Transverse colon (tissue), 4 donors: ENCODE measurements at regions of chr1 and their contacts with region 1.

Region 1: GRCh38 chr1:189158155-189158554 is 1319.5 kb downstream of the BRINP3 start:
- DNase-seq: no peak
- H3K4me3 ChIP-seq: no peak overlapping the region
- H3K27ac ChIP-seq: no peak overlapping the region
- H3K4me1 ChIP-seq: no peaks in the 10 kb centered on the region
- H3K27me3 ChIP-seq: no peaks in the 10 kb centered on the region
- CTCF ChIP-seq: no peak
- EP300 ChIP-seq: no peak
- POLR2A ChIP-seq: no peak

Region 2: GRCh38 chr1:188930382-188930781 is 227.8 kb before region 1 on chr1:
- in situ Hi-C with region 1: no loop called
- intact Hi-C with region 1: no loop called
- DNase-seq: no peak
- H3K4me3 ChIP-seq: no peak overlapping the region
- H3K27ac ChIP-seq: no peak overlapping the region
- H3K4me1 ChIP-seq: no peaks in the 10 kb centered on the region
- H3K27me3 ChIP-seq: no peaks in the 10 kb centered on the region
- CTCF ChIP-seq: no peak
- EP300 ChIP-seq: no peak
- POLR2A ChIP-seq: no peak

Region 3: DNA sequence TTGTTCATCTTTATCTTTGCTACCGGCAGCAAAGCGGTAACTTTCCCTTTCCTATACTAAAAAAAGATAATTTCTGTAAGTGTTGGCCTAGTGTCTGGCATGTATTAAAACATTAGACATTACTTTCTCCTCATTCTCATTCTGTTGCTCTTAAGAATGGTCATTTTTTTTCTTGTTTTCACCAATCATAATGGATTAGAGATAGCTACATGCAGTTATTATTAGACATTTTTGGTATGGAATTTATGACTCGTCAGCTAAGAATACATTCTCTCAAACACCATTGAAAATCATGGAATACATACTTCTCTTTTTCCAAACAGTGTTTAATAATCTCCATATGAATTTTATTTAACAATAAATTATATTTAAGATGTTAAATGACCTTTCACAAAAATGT is 164.9 kb after region 1 on chr1:
- in situ Hi-C with region 1: no loop called
- intact Hi-C with region 1: loop called (anchors 5 kb)
- DNase-seq: no peak
- H3K4me3 ChIP-seq: no peak overlapping the region
- H3K27ac ChIP-seq: no peak overlapping the region
- H3K4me1 ChIP-seq: no peaks in the 10 kb centered on the region
- H3K27me3 ChIP-seq: no peaks in the 10 kb centered on the region
- CTCF ChIP-seq: no peak
- EP300 ChIP-seq: no peak
- POLR2A ChIP-seq: no peak

Region 4: DNA sequence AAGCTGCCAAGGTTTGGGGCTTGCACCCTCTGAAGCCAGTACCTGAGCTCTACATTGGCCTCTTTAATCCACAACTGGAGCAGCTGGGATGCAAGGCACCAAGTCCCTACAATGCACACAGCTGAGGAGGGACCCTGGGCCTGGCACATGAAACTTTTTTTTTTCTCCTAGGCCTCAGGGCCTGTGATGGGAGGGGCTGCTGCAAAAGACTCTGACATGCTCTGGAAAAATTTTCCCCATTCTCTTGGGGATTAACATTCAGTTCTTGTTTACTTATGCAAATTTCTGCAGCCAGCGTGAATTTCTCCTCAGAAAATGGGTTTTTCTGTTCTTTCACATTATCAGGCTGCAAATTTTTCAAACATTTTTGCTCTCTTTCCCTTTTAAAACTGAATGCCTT is 247.3 kb after region 1 on chr1:
- in situ Hi-C with region 1: no loop called
- intact Hi-C with region 1: no loop called
- DNase-seq: no peak
- H3K4me3 ChIP-seq: no peak overlapping the region
- H3K27ac ChIP-seq: no peak overlapping the region
- H3K4me1 ChIP-seq: no peaks in the 10 kb centered on the region
- H3K27me3 ChIP-seq: no peaks in the 10 kb centered on the region
- CTCF ChIP-seq: no peak
- EP300 ChIP-seq: no peak
- POLR2A ChIP-seq: no peak